GM13976 (cell line): ENCODE measurements at regions of chr15 and their contacts with region 1.

Region 1: GRCh38 chr15:81939604-81940440 is 106.0 kb downstream of the MEX3B start:
- DNase-seq: peak; percentile 47
- CTCF ChIP-seq: peak; percentile 56

Region 2: GRCh38 chr15:81480645-81481053 is 459.2 kb before region 1 on chr15:
- in situ Hi-C with region 1: loop called (anchors 25 kb)
- DNase-seq: peak; percentile 42
- CTCF ChIP-seq: peak; percentile 70